ENCODE measurements at regions of chr6 and their contacts with region 1.

Region 1: GRCh38 chr6:122381497-122382265 is 17.8 kb upstream of the HSF2 start:
- DNase-seq: peak; percentile 48
- H3K4me3 ChIP-seq: no peak overlapping the region
- H3K27ac ChIP-seq: no peak overlapping the region
- H3K4me1 ChIP-seq: no peaks in the 10 kb centered on the region
- H3K27me3 ChIP-seq: no peaks in the 10 kb centered on the region
- CTCF ChIP-seq: peak; percentile 70 to 84

Region 2: GRCh38 chr6:122092366-122092765 is 289.3 kb before region 1 on chr6:
- CTCF ChIA-PET with region 1: no interaction called
- dilution Hi-C with region 1: no loop called
- in situ Hi-C with region 1: no loop called
- intact Hi-C with region 1: no loop called
- DNase-seq: no peak
- H3K4me3 ChIP-seq: no peak overlapping the region
- H3K27ac ChIP-seq: no peak overlapping the region
- H3K4me1 ChIP-seq: no peaks in the 10 kb centered on the region
- H3K27me3 ChIP-seq: no peaks in the 10 kb centered on the region
- CTCF ChIP-seq: no peak

Region 3: GRCh38 chr6:122471107-122472021 is 89.7 kb after region 1 on chr6 and contains the start of gene SERINC1:
- CTCF ChIA-PET with region 1: no interaction called
- dilution Hi-C with region 1: no loop called
- in situ Hi-C with region 1: no loop called
- intact Hi-C with region 1: loop called (anchors 5 kb)
- DNase-seq: peak; percentile 90
- H3K4me3 ChIP-seq: peak within 1 kb of the TSS; percentile 59 to 93 (median 68)
- H3K27ac ChIP-seq: peak within 1 kb of the TSS; percentile 95
- H3K4me1 ChIP-seq: peaks cover 5% of the 10 kb centered on the region
- H3K27me3 ChIP-seq: no peaks in the 10 kb centered on the region
- CTCF ChIP-seq: no peak
- total RNA-seq, gene SERINC1: 97.6 to 153 TPM